Activated T-helper 1 cell treated with anti-CD3 and anti-CD28 coated beads, Interleukin-12 subunit alpha, Interleukin-12 subunit beta, Interleukin-2, Interleukin-4 antibody, amounts not matched to agents 30 ng/mL and 10 ng/mL and 1 ng/mL, durations not matched to agents 14 hours and 24 hours and 36 hours (primary cell): ENCODE measurements at regions of chr2 and their contacts with region 1.

Region 1: GRCh38 chr2:152335010-152335725 is at the start of gene FMNL2:
- DNase-seq: peak; percentile 54
- H3K4me3 Mint-ChIP-seq: peak within 1 kb of the TSS; percentile 85
- H3K27ac Mint-ChIP-seq: peak within 1 kb of the TSS; percentile 56
- H3K4me1 Mint-ChIP-seq: peaks cover 27% of the 10 kb centered on the region
- H3K27me3 Mint-ChIP-seq: peaks cover 48% of the 10 kb centered on the region
- total RNA-seq, gene FMNL2: 14.8 and 16.1 TPM in 2 replicates

Region 2: GRCh38 chr2:152097801-152098495 is 237.2 kb before region 1 on chr2:
- intact Hi-C with region 1: loop called (anchors 10 kb)
- DNase-seq: no peak
- H3K4me3 Mint-ChIP-seq: peak overlapping the region; percentile 61
- H3K27ac Mint-ChIP-seq: no peak overlapping the region
- H3K4me1 Mint-ChIP-seq: peaks cover 18% of the 10 kb centered on the region
- H3K27me3 Mint-ChIP-seq: peaks cover 64% of the 10 kb centered on the region

Region 3: DNA sequence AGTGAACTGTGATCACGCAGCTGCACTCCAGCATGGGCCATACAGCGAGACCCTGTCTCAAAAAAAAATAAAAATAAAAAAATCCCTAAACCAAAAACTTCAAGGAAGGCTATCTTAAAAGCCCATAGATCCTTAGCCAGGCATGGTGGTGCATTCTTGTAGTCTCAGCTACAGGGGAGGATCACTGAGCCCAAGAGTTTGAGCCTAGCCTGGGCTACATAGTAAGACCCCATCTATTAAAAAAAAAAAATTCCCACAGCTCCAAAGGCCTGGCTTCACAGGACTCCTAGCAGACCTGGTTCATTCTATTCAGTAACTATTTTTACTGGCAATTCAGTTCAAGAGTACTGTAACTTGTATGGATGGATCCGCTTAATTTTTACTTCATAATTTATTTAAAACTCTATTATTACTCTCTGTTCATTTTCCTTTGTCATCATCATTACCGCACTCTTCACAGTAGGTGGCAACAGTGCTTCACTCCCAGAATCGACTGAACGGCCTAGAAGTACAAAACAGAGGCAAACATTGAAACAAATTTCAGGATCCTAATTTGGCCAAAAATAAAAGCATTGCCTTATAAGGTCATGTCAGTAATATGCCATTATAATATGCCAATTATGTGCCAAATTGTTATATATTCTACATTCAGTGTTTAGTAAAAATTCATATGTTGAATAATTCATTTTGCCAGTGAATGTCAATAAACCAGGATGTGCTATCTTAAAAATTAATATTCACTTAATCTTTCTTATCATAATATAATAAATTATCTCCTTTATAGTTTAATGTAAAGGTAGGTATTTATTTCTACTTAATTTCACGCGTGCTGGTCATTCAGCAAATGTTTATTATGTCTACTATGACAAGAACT is 145.3 kb before region 1 on chr2:
- intact Hi-C with region 1: loop called (anchors 5 kb)
- DNase-seq: no peak
- H3K4me3 Mint-ChIP-seq: no peak overlapping the region
- H3K27ac Mint-ChIP-seq: no peak overlapping the region
- H3K4me1 Mint-ChIP-seq: peaks cover 4% of the 10 kb centered on the region
- H3K27me3 Mint-ChIP-seq: peaks cover 7% of the 10 kb centered on the region

Region 4: DNA sequence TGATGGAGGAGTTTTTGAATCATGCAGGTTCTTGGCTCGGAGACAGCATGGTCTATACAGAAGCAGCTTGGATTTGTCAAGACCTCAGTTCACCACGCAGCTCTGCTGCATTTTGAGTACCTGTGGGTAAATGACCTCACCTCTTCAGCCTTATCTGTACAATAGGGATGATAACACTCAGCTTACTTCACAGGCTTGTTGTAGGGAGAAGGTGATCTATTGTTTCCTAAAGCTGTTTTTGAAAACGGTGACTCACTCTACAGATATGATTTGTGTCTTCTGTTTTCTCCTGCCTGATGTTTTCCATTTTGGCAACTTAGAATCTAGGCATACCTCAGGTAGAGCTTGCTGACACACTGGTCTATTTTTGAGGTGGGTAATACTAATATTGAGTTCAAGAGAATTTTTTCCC is 80.1 kb after region 1 on chr2:
- intact Hi-C with region 1: loop called (anchors 2 kb)
- DNase-seq: no peak
- H3K4me3 Mint-ChIP-seq: peak overlapping the region; percentile 16
- H3K27ac Mint-ChIP-seq: peak overlapping the region; percentile 77
- H3K4me1 Mint-ChIP-seq: peaks cover 41% of the 10 kb centered on the region
- H3K27me3 Mint-ChIP-seq: no peaks in the 10 kb centered on the region

Region 5: DNA sequence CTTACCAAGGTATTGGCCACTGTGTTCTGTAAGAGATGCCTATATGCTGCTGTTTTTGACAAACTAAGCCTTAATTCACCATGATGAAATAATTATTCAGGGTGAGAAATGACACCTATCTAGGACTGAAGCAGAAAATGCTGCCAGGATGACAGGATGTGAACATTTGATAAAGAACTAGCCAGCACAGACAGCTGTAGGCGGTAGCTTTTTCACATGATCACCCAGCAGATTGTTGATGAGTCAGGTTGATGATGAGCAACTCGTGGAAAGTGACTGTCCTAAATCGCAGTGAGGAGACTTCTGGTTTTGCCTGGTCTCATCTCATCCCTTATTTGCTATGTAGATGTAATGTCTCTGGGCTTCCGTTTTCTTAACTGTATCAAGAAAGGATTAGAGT is 238.0 kb after region 1 on chr2:
- intact Hi-C with region 1: loop called (anchors 2 kb)
- DNase-seq: peak; percentile 7
- H3K4me3 Mint-ChIP-seq: no peak overlapping the region
- H3K27ac Mint-ChIP-seq: no peak overlapping the region
- H3K4me1 Mint-ChIP-seq: peaks cover 9% of the 10 kb centered on the region
- H3K27me3 Mint-ChIP-seq: peaks cover 6% of the 10 kb centered on the region

Region 6: GRCh38 chr2:152635635-152636298 is 300.6 kb after region 1 on chr2:
- intact Hi-C with region 1: loop called (anchors 2 kb)
- DNase-seq: peak; percentile 51
- H3K4me3 Mint-ChIP-seq: no peak overlapping the region
- H3K27ac Mint-ChIP-seq: no peak overlapping the region
- H3K4me1 Mint-ChIP-seq: peaks cover 6% of the 10 kb centered on the region
- H3K27me3 Mint-ChIP-seq: peaks cover 2% of the 10 kb centered on the region